ENCODE measurements at regions of chr7 and their contacts with region 1.

Region 1: GRCh38 chr7:2632733-2633537 is 1.1 kb downstream of the TTYH3 start:
- DNase-seq: no peak
- H3K4me3 ChIP-seq: peak overlapping the region; percentile 79 to 86
- H3K27ac ChIP-seq: peak overlapping the region; percentile 85
- H3K4me1 ChIP-seq: peaks cover 70% of the 10 kb centered on the region
- H3K27me3 ChIP-seq: no peaks in the 10 kb centered on the region
- CTCF ChIP-seq: no peak
- POLR2A ChIP-seq: peak in 1 of 2 donors; percentile 33

Region 2: DNA sequence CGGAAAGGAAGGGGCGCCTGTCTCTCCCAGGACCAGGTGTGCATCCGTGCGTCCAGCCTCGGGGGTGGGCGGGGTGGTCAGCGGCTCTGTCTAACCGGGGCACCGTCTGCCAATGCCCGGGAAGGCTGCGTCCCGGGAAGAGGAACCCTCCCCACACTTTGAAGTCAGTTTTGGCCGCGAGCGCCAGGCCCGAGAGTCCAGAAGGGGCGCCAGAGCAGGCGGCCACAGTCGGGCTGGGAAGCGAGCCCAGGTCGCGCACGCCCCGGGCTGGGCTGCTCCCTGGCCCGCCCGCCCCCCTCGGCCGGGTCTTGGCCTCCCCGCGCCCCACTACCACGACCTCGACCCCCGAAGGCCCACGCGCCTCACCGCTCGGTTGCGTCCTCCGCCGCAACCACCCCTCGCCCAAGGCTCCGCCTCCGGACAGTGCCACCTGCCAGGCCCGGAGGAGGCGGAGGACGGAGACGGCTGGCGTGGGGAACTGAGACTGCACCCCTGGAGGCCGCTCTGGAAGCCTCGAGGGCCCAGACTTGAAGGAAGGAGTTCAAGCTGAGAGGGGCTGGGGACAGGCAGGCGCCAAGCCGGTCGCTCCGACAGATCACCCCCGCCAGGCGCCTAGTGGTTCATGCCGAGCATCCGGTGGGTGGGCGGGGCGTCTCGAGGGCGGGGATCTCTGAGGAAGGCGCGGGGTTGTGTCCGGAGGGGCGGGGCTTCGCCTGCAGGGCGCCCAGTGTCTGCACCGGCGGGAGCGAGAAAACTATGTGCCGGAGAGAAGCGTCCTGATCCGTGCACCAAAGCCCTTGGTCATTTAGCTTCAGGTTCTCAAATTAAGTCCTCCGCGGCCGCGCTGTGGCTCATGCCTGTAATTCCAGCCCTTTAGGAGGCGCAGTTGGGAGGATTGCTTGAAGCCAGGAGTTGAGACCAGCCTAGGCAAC is 77.5 kb before region 1 on chr7 and contains the start of gene BRAT1:
- intact Hi-C with region 1: loop called (anchors 10 kb)
- DNase-seq: peak in 1 of 2 donors; percentile 94
- H3K4me3 ChIP-seq: peak within 1 kb of the TSS; percentile 68 to 74
- H3K27ac ChIP-seq: peak within 1 kb of the TSS; percentile 95
- H3K4me1 ChIP-seq: peaks cover 52% of the 10 kb centered on the region
- H3K27me3 ChIP-seq: no peaks in the 10 kb centered on the region
- CTCF ChIP-seq: peak in 1 of 3 experiments; percentile 18
- POLR2A ChIP-seq: peak in 1 of 2 donors; percentile 49
- total RNA-seq, gene BRAT1: 66.0 TPM